ENCODE measurements at regions of chr2 and their contacts with region 1.

Region 1: GRCh38 chr2:54551123-54551756 is 95.1 kb downstream of the SPTBN1 start:
- DNase-seq: no peak
- CTCF ChIP-seq: no peak

Region 2: DNA sequence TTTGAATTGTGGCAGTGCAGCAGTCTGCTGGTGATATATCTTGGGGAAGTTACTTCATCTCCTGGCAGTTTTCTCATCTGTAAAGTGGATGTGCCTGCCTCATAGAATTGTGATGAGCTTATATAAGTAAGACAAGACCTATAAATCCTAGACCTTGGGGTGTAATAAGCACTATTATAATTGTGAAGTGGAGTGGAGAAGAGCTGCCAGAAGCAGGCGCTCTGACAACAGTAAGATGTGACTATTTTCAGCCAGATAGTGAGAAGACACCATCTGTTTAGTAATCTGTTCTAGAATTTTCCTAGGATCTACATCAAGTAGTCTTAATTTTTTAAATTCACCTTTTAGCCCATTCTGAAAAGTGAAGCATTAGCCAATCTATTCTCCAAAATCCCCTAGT is 209.6 kb before region 1 on chr2:
- CTCF ChIA-PET with region 1: no interaction called
- POLR2A ChIA-PET with region 1: no interaction called
- DNase-seq: no peak
- CTCF ChIP-seq: no peak

Region 3: DNA sequence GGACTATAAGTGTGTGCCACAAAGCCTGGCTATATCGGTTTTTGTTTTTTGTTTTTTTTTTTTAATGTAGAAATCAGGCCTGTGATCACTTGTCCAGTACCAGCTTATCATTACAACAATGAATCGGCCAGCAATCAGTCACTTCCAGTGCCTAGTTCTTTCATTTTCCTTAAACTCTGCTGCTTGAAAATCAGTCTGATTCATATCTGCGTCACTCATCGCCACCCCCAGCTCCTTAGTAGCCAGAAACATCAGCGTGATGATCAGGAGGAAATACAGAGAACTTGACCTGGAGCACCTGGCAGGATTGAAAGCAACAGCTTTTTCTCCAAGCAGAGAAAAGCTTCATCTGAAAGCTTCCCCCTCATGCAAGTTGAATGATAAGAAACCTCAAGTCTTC is 19.7 kb before region 1 on chr2:
- CTCF ChIA-PET with region 1: interaction called, 10 read pairs
- POLR2A ChIA-PET with region 1: no interaction called
- DNase-seq: no peak
- CTCF ChIP-seq: no peak

Region 4: DNA sequence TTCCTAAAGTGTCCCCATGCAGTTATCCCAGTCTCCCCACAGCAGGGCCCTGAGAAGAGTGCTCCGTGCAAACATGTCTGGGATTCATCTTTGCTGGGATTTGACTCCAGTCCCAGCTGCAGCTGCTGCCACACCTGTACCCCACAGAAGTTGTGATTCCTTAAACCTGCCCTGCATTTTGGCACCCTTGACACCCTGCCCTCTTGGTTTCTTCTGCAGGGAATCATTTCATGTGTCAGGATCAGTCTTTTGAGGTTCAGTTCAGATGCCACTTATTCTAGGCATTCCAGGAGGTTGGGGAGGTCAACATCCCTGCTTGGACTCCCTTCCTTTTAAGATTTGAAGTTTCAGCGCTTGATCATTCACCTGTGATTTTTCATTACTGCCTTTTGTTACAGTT is 13.2 kb after region 1 on chr2:
- CTCF ChIA-PET with region 1: no interaction called
- POLR2A ChIA-PET with region 1: no interaction called
- DNase-seq: no peak
- CTCF ChIP-seq: no peak